MCF 10A (cell line): ENCODE measurements at regions of chr3 and their contacts with region 1.

Region 1: GRCh38 chr3:129160891-129161859 is at the start of gene ISY1:
- DNase-seq: peak; percentile 96
- H3K4me3 Mint-ChIP-seq: peak within 1 kb of the TSS; percentile 98
- H3K27ac Mint-ChIP-seq: peak within 1 kb of the TSS; percentile 100
- H3K4me1 Mint-ChIP-seq: peaks cover 31% of the 10 kb centered on the region
- H3K27me3 Mint-ChIP-seq: no peaks in the 10 kb centered on the region
- CTCF ChIP-seq: peak; percentile 60
- total RNA-seq, gene ISY1: 52.5 and 57.8 TPM in 2 replicates

Region 2: DNA sequence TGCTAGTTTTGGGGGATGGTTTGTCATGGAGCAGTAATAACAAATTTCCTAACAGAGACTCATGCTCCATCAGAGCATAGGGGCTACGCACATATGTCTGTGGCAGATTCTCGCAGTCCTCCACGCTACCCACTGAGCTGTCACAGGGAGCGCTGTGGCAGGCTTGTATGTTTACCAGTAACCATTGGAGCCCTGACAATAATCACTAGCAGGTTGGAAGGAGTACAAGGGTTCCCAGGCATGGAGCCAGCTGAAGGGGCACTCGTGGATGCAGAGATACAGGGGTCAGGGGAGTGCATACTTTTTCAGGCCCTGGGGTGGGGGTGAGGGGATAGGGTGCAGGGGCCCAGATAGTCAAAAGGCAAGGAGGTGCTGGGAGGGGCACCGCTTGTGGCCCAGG is 108.5 kb before region 1 on chr3:
- CTCF ChIA-PET with region 1: interaction called, 8 read pairs
- POLR2A ChIA-PET with region 1: interaction called, 4 read pairs
- intact Hi-C with region 1: loop called (anchors 1 kb)
- DNase-seq: no peak
- H3K4me3 Mint-ChIP-seq: no peak overlapping the region
- H3K27ac Mint-ChIP-seq: no peak overlapping the region
- H3K4me1 Mint-ChIP-seq: peaks cover 9% of the 10 kb centered on the region
- H3K27me3 Mint-ChIP-seq: peaks cover 16% of the 10 kb centered on the region
- CTCF ChIP-seq: no peak

Region 3: GRCh38 chr3:129068291-129068886 is 92.8 kb before region 1 on chr3:
- CTCF ChIA-PET with region 1: no interaction called
- POLR2A ChIA-PET with region 1: no interaction called
- intact Hi-C with region 1: no loop called
- DNase-seq: no peak
- H3K4me3 Mint-ChIP-seq: no peak overlapping the region
- H3K27ac Mint-ChIP-seq: no peak overlapping the region
- H3K4me1 Mint-ChIP-seq: no peaks in the 10 kb centered on the region
- H3K27me3 Mint-ChIP-seq: no peaks in the 10 kb centered on the region
- CTCF ChIP-seq: no peak

Region 4: GRCh38 chr3:129120254-129121004 is 40.7 kb before region 1 on chr3:
- CTCF ChIA-PET with region 1: interaction called, 3 read pairs
- POLR2A ChIA-PET with region 1: interaction called, 29 read pairs
- intact Hi-C with region 1: no loop called
- DNase-seq: peak; percentile 98
- H3K4me3 Mint-ChIP-seq: peak overlapping the region; percentile 77
- H3K27ac Mint-ChIP-seq: peak overlapping the region; percentile 82
- H3K4me1 Mint-ChIP-seq: peaks cover 26% of the 10 kb centered on the region
- H3K27me3 Mint-ChIP-seq: no peaks in the 10 kb centered on the region
- CTCF ChIP-seq: no peak

Region 5: GRCh38 chr3:129176051-129176450 is 14.9 kb after region 1 on chr3:
- CTCF ChIA-PET with region 1: interaction called, 16 read pairs
- POLR2A ChIA-PET with region 1: interaction called, 82 read pairs
- intact Hi-C with region 1: no loop called
- DNase-seq: no peak
- H3K4me3 Mint-ChIP-seq: no peak overlapping the region
- H3K27ac Mint-ChIP-seq: no peak overlapping the region
- H3K4me1 Mint-ChIP-seq: peaks cover 28% of the 10 kb centered on the region
- H3K27me3 Mint-ChIP-seq: no peaks in the 10 kb centered on the region
- CTCF ChIP-seq: no peak

Region 6: DNA sequence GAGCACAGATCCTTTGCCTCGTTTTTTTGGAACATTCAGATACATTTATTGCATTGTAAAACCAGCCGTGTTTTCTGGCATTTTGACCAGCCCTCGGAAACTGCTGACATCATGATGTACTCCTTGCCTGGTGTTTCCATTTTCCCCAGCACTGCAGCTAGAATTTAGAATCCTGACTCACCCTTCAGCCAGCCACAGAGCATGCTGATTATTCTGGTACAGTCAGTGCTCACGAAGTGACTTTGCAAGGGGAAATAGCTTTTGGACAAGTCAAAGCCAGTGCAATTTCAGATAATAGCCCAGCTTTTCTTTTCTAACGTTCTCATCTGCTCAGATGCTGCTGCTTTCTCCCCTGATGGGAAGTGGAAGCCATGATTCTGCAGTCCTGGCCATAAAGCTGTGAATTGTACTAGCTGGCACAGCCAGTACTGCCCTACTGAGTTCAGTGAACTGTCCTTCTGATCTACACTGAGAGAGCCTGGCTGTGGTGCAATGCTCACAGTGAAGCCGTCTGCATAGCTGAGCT is 34.6 kb after region 1 on chr3:
- CTCF ChIA-PET with region 1: interaction called, 4 read pairs
- POLR2A ChIA-PET with region 1: interaction called, 23 read pairs
- intact Hi-C with region 1: no loop called
- DNase-seq: peak; percentile 83
- H3K4me3 Mint-ChIP-seq: peak overlapping the region; percentile 50
- H3K27ac Mint-ChIP-seq: peak overlapping the region; percentile 57
- H3K4me1 Mint-ChIP-seq: peaks cover 9% of the 10 kb centered on the region
- H3K27me3 Mint-ChIP-seq: no peaks in the 10 kb centered on the region
- CTCF ChIP-seq: no peak

Region 7: DNA sequence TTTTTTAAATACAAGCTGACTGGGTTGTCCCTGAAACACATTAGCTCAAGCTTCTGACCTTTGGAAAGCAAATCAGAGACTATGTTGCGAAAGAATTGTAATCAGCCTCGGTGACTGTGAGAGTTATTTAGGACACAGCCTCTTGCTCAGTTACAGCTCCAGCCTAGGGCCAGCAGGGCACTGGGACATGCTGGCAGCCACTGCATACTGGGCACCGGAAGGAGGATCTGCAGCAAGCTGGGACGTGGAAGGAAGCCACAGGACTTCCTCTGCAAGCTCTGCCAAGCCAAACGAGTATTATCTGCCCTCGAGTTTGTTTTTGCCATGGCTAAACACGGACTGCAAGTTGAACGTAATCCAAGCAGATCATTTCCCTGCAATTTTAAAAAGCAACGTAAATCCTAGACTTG is 63.8 kb after region 1 on chr3:
- CTCF ChIA-PET with region 1: interaction called, 5 read pairs
- POLR2A ChIA-PET with region 1: interaction called, 24 read pairs
- intact Hi-C with region 1: no loop called
- DNase-seq: peak; percentile 91
- H3K4me3 Mint-ChIP-seq: peak overlapping the region; percentile 41
- H3K27ac Mint-ChIP-seq: peak overlapping the region; percentile 80
- H3K4me1 Mint-ChIP-seq: peaks cover 23% of the 10 kb centered on the region
- H3K27me3 Mint-ChIP-seq: no peaks in the 10 kb centered on the region
- CTCF ChIP-seq: no peak

Region 8: GRCh38 chr3:129238945-129239706 is 78.0 kb after region 1 on chr3:
- CTCF ChIA-PET with region 1: interaction called, 3 read pairs
- POLR2A ChIA-PET with region 1: interaction called, 25 read pairs
- intact Hi-C with region 1: no loop called
- DNase-seq: peak; percentile 77
- H3K4me3 Mint-ChIP-seq: peak overlapping the region; percentile 54
- H3K27ac Mint-ChIP-seq: peak overlapping the region; percentile 96
- H3K4me1 Mint-ChIP-seq: peaks cover 19% of the 10 kb centered on the region
- H3K27me3 Mint-ChIP-seq: no peaks in the 10 kb centered on the region
- CTCF ChIP-seq: no peak

Region 9: GRCh38 chr3:129264071-129264385 is 102.9 kb after region 1 on chr3:
- CTCF ChIA-PET with region 1: no interaction called
- POLR2A ChIA-PET with region 1: no interaction called
- intact Hi-C with region 1: no loop called
- DNase-seq: peak; percentile 3
- H3K4me3 Mint-ChIP-seq: no peak overlapping the region
- H3K27ac Mint-ChIP-seq: no peak overlapping the region
- H3K4me1 Mint-ChIP-seq: peaks cover 5% of the 10 kb centered on the region
- H3K27me3 Mint-ChIP-seq: no peaks in the 10 kb centered on the region
- CTCF ChIP-seq: no peak

Region 10: DNA sequence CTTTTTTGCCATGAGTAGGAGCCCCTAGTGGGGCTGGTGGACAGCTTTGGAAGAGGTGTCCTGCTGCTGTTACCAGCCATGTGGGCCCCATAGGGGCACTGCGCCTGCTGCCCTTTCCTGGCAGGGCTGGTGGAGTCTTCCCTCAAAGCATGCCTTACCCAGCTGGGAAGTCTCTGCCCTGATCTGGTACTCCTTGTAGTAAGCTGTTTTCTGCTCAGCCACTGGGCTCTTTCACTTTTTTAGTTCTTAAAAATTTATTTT is 143.7 kb after region 1 on chr3:
- CTCF ChIA-PET with region 1: no interaction called
- POLR2A ChIA-PET with region 1: no interaction called
- intact Hi-C with region 1: no loop called
- DNase-seq: no peak
- H3K4me3 Mint-ChIP-seq: no peak overlapping the region
- H3K27ac Mint-ChIP-seq: no peak overlapping the region
- H3K4me1 Mint-ChIP-seq: no peaks in the 10 kb centered on the region
- H3K27me3 Mint-ChIP-seq: no peaks in the 10 kb centered on the region
- CTCF ChIP-seq: no peak

Region 11: DNA sequence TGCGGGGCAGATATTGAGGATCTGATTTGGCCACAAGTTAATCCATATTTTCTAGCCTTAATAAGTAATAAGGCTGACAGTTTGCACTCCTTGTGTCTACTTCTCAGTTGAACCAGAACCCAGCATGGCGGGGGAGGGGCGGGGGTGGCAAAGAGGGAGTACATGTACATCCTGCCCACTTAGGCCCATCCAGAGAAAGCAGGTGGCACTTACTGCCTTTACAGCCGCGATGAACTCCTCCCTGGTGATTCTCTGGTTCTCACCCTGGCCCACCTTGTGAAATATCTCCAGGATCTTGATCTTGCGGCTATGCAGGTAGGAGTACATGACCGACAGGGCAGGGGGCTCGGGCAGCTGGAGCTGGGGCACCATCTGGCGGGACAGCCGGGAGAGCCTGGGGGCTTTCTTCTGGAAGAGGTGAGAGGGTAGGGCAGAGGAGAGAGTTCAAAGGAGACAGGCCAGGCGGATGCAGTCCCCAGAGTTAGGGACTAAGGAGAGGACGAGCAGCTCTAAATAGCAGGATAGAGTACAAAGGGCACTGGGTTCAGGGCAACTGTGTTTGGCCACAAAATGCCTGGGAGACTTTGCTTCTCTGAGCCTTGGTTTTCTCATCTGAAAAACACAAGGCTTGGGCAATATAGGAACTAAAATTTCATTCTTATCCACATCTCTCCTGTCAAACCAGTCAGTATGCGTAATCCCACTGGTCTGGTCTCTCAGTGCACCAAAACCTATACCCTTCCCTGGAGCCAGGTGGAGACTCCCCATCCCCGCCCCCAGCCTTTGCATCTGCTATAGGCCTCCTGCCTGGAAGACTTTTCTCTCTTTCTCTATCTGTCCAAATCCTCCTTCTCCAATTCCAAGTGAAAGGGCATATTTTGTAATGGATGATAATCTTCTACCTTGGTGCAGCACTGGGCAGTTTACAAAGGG is 257.1 kb after region 1 on chr3:
- CTCF ChIA-PET with region 1: no interaction called
- POLR2A ChIA-PET with region 1: no interaction called
- intact Hi-C with region 1: no loop called
- DNase-seq: no peak
- H3K4me3 Mint-ChIP-seq: no peak overlapping the region
- H3K27ac Mint-ChIP-seq: no peak overlapping the region
- H3K4me1 Mint-ChIP-seq: peaks cover 7% of the 10 kb centered on the region
- H3K27me3 Mint-ChIP-seq: no peaks in the 10 kb centered on the region
- CTCF ChIP-seq: no peak